Activated T-helper 1 cell treated with anti-CD3 and anti-CD28 coated beads, Interleukin-12 subunit alpha, Interleukin-12 subunit beta, Interleukin-2, Interleukin-4 antibody, amounts not matched to agents 30 ng/mL and 10 ng/mL and 1 ng/mL, durations not matched to agents 14 hours and 24 hours and 36 hours (primary cell): ENCODE measurements at regions of chr12 and their contacts with region 1.

Region 1: GRCh38 chr12:19739183-19739776 is 300.0 kb downstream of the AEBP2 start:
- DNase-seq: no peak
- H3K4me3 Mint-ChIP-seq: no peak overlapping the region
- H3K27ac Mint-ChIP-seq: no peak overlapping the region
- H3K4me1 Mint-ChIP-seq: no peaks in the 10 kb centered on the region
- H3K27me3 Mint-ChIP-seq: peaks cover 17% of the 10 kb centered on the region

Region 2: DNA sequence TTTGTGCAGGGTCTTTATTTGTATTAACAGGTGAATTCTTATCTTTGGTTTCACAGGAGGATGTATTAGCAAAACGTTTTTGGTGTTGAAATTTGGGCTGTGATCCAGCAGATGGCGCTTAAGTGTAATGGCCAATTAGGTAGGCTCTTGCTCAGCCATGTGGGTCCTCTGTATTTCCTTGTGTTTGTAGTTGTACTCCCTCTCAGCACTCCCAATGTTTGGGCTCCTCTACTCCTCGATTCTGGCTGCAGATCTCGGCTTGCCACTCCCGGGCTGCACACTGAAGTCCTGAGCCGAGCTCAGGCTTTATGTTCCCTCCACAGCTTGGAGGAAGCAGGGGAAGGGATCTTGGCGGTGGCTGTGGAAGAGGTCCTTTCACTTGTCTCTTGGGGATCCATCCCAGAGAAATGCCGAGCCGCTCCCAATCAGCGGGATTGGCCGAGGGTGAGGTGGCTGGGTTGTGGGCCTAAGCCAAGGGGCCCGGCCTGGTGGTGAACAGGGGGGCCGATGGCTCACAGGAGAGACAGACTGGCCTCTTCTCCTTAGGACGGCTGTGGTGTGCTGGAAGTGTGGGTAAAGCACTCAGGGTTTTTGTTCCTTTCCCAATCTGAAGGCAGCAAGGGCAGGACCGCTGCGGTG is 166.2 kb before region 1 on chr12:
- intact Hi-C with region 1: loop called (anchors 2 kb)
- DNase-seq: no peak
- H3K4me3 Mint-ChIP-seq: no peak overlapping the region
- H3K27ac Mint-ChIP-seq: no peak overlapping the region
- H3K4me1 Mint-ChIP-seq: peaks cover 6% of the 10 kb centered on the region
- H3K27me3 Mint-ChIP-seq: peaks cover 2% of the 10 kb centered on the region

Region 3: DNA sequence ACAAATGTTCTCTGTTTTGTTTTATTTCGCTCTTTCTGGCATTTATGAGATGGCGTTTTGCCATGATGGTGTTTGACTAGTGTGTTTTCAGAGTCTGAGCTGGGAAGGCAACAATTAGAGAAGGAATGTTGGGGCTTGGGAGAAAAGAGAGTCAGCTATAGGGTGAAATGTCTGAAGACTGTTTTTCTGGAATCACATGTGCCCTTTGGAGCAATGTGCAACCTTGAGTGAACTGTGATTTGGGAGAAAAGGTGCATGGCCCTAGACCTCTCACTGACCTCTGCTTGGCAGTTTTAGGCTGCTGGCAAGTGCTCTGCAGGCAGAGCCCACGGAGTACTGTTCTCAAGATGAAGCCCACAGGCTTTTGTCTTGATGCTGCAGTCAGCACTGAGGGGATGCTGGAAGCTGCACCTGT is 249.2 kb after region 1 on chr12:
- intact Hi-C with region 1: no loop called
- DNase-seq: no peak
- H3K4me3 Mint-ChIP-seq: no peak overlapping the region
- H3K27ac Mint-ChIP-seq: no peak overlapping the region
- H3K4me1 Mint-ChIP-seq: no peaks in the 10 kb centered on the region
- H3K27me3 Mint-ChIP-seq: no peaks in the 10 kb centered on the region

Region 4: DNA sequence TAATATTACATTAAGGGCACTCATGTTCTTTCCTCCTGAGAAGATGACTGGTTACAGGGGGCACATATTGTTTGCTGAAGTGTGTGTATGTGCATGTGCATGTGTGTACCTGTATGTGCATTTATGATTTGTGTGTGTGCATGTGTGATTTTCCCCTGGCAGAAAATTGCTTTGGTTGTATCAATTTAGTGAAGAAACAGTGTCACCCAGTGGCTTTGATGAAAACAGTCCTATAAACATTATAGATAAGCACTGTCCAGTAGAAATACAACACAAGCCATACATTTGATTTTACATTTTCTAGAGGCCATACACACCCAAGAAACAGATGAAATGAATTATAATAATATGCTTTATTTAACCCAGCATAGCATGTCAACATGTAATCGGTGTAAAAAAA is 637.7 kb after region 1 on chr12:
- intact Hi-C with region 1: loop called (anchors 2 kb)
- DNase-seq: no peak
- H3K4me3 Mint-ChIP-seq: no peak overlapping the region
- H3K27ac Mint-ChIP-seq: no peak overlapping the region
- H3K4me1 Mint-ChIP-seq: no peaks in the 10 kb centered on the region
- H3K27me3 Mint-ChIP-seq: peaks cover 2% of the 10 kb centered on the region